Vagina (tissue), 2 donors: ENCODE measurements at regions of chr1 and their contacts with region 1.

Region 1: GRCh38 chr1:53938136-53938830 is 7.2 kb downstream of the IFT25 start:
- DNase-seq: no peak
- H3K4me3 ChIP-seq: no peak overlapping the region
- H3K27ac ChIP-seq: no peak overlapping the region
- H3K4me1 ChIP-seq: peaks cover under 1% of the 10 kb centered on the region
- H3K27me3 ChIP-seq: no peaks in the 10 kb centered on the region
- CTCF ChIP-seq: no peak
- POLR2A ChIP-seq: no peak

Region 2: GRCh38 chr1:52098139-52098871 is 1840.0 kb before region 1 on chr1:
- intact Hi-C with region 1: no loop called
- DNase-seq: peak in 1 of 2 donors; percentile 29
- H3K4me3 ChIP-seq: no peak overlapping the region
- H3K27ac ChIP-seq: no peak overlapping the region
- H3K4me1 ChIP-seq: no peaks in the 10 kb centered on the region
- H3K27me3 ChIP-seq: no peaks in the 10 kb centered on the region
- CTCF ChIP-seq: no peak
- POLR2A ChIP-seq: no peak

Region 3: DNA sequence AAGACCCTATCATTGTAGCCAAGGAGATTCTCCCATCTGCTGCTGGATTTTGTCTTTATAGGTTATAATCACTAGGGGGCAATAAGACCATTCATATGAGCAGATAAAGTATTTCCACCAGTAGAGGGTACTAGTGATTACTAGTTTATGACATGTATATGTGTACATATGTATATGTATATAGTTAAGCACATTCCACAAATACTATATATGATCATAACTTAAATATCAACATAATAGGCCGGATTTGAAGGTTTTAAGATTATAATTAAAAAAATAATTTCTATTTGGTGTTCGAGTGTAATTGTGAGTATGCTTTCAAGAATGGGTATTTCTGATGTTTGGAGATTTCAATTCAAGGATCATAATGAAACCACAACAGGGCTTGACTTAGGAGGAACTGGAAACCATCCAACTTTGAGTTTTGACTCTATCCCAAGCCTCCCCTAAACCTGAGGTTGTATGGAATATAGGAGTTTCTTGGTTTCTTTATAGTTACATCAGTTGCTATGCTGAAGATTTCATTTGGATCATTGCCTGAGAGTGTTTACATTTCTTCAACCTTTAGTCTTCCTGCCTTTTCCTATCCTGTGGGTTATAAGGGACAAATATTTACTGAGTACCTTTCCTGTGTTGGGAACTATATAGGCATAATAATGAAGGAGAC is 132.0 kb after region 1 on chr1:
- intact Hi-C with region 1: no loop called
- DNase-seq: no peak
- H3K4me3 ChIP-seq: no peak overlapping the region
- H3K27ac ChIP-seq: no peak overlapping the region
- H3K4me1 ChIP-seq: no peaks in the 10 kb centered on the region
- H3K27me3 ChIP-seq: no peaks in the 10 kb centered on the region
- CTCF ChIP-seq: peak; percentile 53 to 74 (median 56)
- POLR2A ChIP-seq: no peak

Region 4: DNA sequence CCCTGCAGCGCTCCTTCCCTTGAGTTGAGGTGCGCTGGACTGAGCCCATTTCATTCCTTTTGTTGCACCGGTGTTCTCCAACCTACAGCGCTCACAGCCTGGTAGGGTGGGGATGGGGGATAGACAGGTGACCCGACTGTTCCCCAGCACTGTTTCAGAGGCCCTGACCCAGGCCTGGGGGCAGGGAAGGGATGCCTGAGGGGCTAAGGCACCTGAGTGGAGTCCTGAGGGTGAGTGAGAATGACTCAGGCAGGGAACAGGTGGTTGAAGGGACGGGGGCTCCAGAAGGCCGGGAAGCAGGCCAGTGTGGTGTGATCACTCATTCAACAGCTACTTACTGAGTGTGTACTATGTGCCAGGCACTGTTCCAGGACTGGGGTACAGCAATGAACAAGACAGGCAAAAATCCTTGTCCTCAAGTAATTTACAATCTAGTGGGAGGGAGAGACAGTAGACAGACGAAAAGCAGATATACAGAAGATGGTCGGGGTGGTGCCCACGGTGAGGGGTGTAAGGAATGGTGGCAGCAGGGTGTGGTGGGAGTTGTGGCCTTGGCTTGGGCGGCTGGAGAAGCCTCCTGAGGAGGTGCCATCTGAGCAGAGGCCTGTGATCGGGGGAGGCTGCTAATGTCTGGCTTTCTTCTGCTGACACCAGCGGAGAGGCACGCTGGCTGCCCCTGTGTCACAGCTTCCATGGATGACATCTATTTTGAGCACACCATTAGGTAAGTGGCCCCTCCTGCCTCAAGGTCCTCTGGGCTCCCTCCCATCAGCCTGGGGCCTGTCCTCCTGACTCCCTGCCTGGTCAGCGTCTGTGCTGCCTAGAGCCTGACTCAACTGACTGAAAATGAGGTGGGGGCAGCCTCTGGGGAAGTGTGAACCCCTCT is 647.1 kb after region 1 on chr1:
- intact Hi-C with region 1: loop called (anchors 5 kb)
- DNase-seq: no peak
- H3K4me3 ChIP-seq: no peak overlapping the region
- H3K27ac ChIP-seq: no peak overlapping the region
- H3K4me1 ChIP-seq: peaks cover 16% of the 10 kb centered on the region
- H3K27me3 ChIP-seq: no peaks in the 10 kb centered on the region
- CTCF ChIP-seq: no peak
- POLR2A ChIP-seq: no peak